Activated CD8-positive, alpha-beta T cell treated with anti-CD3 and anti-CD28 coated beads, Interleukin-2, amount 10 ng/mL, durations not matched to agents 7 days and 5 days (primary cell): ENCODE measurements at regions of chr16 and their contacts with region 1.

Region 1: GRCh38 chr16:3173892-3174617 is 13.9 kb upstream of the OR1F1 start:
- DNase-seq: no peak
- ATAC-seq: peak; percentile 10
- H3K4me3 Mint-ChIP-seq: peak overlapping the region; percentile 63
- H3K27ac Mint-ChIP-seq: peak overlapping the region; percentile 30
- H3K4me1 Mint-ChIP-seq: peaks cover 42% of the 10 kb centered on the region
- H3K27me3 Mint-ChIP-seq: peaks cover 56% of the 10 kb centered on the region

Region 2: GRCh38 chr16:2983706-2984136 is 190.3 kb before region 1 on chr16:
- CTCF ChIA-PET with region 1: no interaction called
- POLR2A ChIA-PET with region 1: no interaction called
- DNase-seq: peak; percentile 81
- ATAC-seq: peak; percentile 46
- H3K4me3 Mint-ChIP-seq: peak overlapping the region; percentile 45
- H3K27ac Mint-ChIP-seq: no peak overlapping the region
- H3K4me1 Mint-ChIP-seq: peaks cover 29% of the 10 kb centered on the region
- H3K27me3 Mint-ChIP-seq: no peaks in the 10 kb centered on the region

Region 3: GRCh38 chr16:3150346-3151218 is 23.5 kb before region 1 on chr16:
- CTCF ChIA-PET with region 1: interaction called, 11 read pairs
- POLR2A ChIA-PET with region 1: interaction called, 4 read pairs
- DNase-seq: peak; percentile 98
- ATAC-seq: peak; percentile 84
- H3K4me3 Mint-ChIP-seq: peak overlapping the region; percentile 85
- H3K27ac Mint-ChIP-seq: peak overlapping the region; percentile 87
- H3K4me1 Mint-ChIP-seq: peaks cover 38% of the 10 kb centered on the region
- H3K27me3 Mint-ChIP-seq: peaks cover 17% of the 10 kb centered on the region

Region 4: GRCh38 chr16:3158471-3159314 is 15.4 kb before region 1 on chr16:
- CTCF ChIA-PET with region 1: interaction called, 14 read pairs
- POLR2A ChIA-PET with region 1: interaction called, 11 read pairs
- DNase-seq: peak; percentile 97
- ATAC-seq: peak; percentile 87
- H3K4me3 Mint-ChIP-seq: peak overlapping the region; percentile 92
- H3K27ac Mint-ChIP-seq: peak overlapping the region; percentile 89
- H3K4me1 Mint-ChIP-seq: peaks cover 52% of the 10 kb centered on the region
- H3K27me3 Mint-ChIP-seq: peaks cover 18% of the 10 kb centered on the region